Activated B cell treated with CpG ODN at 0.5 μM for 24 hours (primary cell): ENCODE measurements at regions of chr12 and their contacts with region 1.

Region 1: GRCh38 chr12:128259556-128260070 is 7.4 kb upstream of the TMEM132C start:
- DNase-seq: no peak
- ATAC-seq: no peak
- H3K4me3 Mint-ChIP-seq: no peak overlapping the region
- H3K27ac Mint-ChIP-seq: no peak overlapping the region
- H3K4me1 Mint-ChIP-seq: no peaks in the 10 kb centered on the region
- H3K27me3 Mint-ChIP-seq: peaks cover 5% of the 10 kb centered on the region
- CTCF ChIP-seq: no peak

Region 2: DNA sequence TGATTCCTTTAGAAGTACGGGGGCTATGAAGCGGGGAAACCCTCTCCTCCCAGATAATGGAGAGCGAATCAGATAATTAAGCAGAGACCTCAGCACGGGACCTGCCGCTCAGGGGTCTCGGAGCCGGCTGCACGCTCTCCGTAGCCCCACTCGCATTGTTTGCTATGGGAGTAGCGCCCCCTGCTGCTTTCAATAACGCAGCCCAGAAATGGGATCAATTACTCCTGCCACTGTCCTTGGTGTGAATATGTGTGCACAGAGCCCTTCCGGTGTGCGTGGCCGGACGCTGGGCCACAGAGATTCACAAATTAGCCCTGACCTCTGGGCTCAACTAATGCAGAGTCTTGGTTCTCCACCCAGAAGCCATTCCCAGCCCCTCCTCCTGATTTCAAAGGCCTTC is 69.0 kb before region 1 on chr12:
- CTCF ChIA-PET with region 1: no interaction called
- POLR2A ChIA-PET with region 1: no interaction called
- intact Hi-C with region 1: no loop called
- DNase-seq: no peak
- ATAC-seq: no peak
- H3K4me3 Mint-ChIP-seq: no peak overlapping the region
- H3K27ac Mint-ChIP-seq: no peak overlapping the region
- H3K4me1 Mint-ChIP-seq: no peaks in the 10 kb centered on the region
- H3K27me3 Mint-ChIP-seq: no peaks in the 10 kb centered on the region
- CTCF ChIP-seq: no peak

Region 3: DNA sequence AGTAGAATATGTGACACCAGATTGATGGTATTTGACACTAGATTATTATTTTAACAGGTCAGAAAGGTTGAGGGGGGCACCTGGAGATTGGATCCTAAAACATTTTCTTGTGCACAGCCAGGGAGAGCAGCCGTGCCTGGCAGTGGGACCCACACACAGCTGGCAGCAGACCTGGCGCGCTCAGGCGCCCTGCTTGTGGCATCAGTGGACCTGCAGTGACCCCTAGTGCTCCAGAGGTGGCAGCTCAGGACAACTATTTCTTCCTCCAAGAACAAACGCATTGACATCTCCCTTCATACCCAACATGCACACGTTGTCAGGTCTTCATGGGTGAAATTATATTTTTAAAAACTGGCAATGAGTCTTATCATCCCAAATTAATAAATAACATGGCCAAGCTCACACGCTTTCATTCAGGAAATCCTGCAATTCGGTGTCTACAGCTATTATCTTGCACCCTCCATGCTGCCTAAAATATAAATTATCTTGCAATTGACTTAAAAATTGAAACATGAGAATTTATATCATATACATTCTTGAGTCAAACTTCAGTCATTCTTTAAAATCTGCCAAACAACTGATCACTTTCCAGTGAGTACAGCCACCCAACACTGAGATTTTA is 1651.9 kb after region 1 on chr12:
- CTCF ChIA-PET with region 1: interaction called, 20 read pairs
- POLR2A ChIA-PET with region 1: no interaction called
- intact Hi-C with region 1: no loop called
- DNase-seq: no peak
- ATAC-seq: no peak
- H3K4me3 Mint-ChIP-seq: no peak overlapping the region
- H3K27ac Mint-ChIP-seq: no peak overlapping the region
- H3K4me1 Mint-ChIP-seq: no peaks in the 10 kb centered on the region
- H3K27me3 Mint-ChIP-seq: peaks cover 6% of the 10 kb centered on the region
- CTCF ChIP-seq: no peak

Region 4: DNA sequence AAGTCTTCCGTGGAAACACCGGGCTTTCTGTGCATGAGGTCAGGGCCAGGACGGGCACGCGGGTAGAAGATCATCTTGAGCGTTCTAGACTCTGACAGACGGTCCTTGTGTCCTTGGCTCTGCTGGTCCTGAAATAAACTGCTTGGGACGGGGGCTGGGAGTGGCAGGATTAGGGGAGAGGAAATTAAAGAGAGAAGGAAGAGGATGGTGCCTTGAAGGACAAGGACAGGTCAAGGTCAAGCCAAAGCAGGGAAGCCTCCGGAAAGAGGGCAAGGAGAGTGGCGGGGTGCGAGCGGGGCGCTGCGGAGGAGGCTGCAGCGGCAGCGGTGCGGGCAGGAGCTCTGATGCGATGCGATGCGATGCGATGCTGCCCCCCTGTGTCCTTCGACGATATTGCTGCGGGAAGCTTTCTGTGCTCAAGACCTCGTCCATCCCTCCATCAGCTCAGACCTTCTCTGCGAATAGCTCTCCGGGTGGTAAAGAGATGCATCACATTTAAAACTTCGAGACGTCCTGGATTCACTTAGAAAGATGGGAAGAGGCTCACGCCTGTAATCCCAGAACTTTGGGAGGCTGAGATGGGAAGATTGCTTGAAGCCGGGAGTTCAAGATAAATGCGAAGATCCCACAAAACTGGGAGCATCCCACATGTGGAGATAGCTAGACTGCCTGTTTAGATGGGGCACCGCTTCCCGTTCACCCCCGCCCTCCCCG is 1754.3 kb after region 1 on chr12:
- CTCF ChIA-PET with region 1: interaction called, 15 read pairs
- POLR2A ChIA-PET with region 1: no interaction called
- intact Hi-C with region 1: loop called (anchors 5 kb)
- DNase-seq: no peak
- ATAC-seq: no peak
- H3K4me3 Mint-ChIP-seq: no peak overlapping the region
- H3K27ac Mint-ChIP-seq: no peak overlapping the region
- H3K4me1 Mint-ChIP-seq: no peaks in the 10 kb centered on the region
- H3K27me3 Mint-ChIP-seq: peaks cover 6% of the 10 kb centered on the region
- CTCF ChIP-seq: no peak

Region 5: GRCh38 chr12:130031571-130032189 is 1772.1 kb after region 1 on chr12:
- CTCF ChIA-PET with region 1: no interaction called
- POLR2A ChIA-PET with region 1: no interaction called
- intact Hi-C with region 1: loop called (anchors 5 kb)
- DNase-seq: peak; percentile 49
- ATAC-seq: no peak
- H3K4me3 Mint-ChIP-seq: no peak overlapping the region
- H3K27ac Mint-ChIP-seq: no peak overlapping the region
- H3K4me1 Mint-ChIP-seq: no peaks in the 10 kb centered on the region
- H3K27me3 Mint-ChIP-seq: peaks cover 4% of the 10 kb centered on the region
- CTCF ChIP-seq: peak; percentile 30